Panc1 (cell line): ENCODE measurements at regions of chr1 and their contacts with region 1.

Region 1: GRCh38 chr1:150243003-150243402 is 7.1 kb upstream of the ANP32E start:
- DNase-seq: no peak
- ATAC-seq: no peak
- H3K4me3 ChIP-seq: no peak overlapping the region
- H3K27ac ChIP-seq: no peak overlapping the region
- H3K4me1 ChIP-seq: no peaks in the 10 kb centered on the region
- H3K27me3 ChIP-seq: no peaks in the 10 kb centered on the region
- CTCF ChIP-seq: no peak

Region 2: DNA sequence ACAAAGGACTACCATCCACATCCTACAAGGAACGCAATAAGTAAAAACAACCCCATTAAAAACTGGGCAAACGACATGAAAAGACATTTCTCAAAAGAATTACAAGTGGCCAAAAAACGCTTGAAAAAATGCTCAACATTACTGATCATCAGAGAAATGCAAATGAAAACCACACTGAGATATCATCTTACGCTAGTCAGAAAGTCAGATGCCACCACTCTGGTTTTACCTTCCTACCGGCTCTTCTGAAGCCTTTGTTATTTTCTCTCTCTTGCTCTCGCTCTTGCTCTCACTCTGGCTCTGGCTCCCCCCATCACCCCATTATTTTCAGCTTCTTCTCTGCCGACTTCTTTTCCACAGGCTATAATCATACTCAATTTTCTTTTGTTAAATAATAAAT is 136.7 kb before region 1 on chr1:
- CTCF ChIA-PET with region 1: no interaction called
- POLR2A ChIA-PET with region 1: no interaction called
- in situ Hi-C with region 1: no loop called
- intact Hi-C with region 1: no loop called
- DNase-seq: no peak
- ATAC-seq: no peak
- H3K4me3 ChIP-seq: no peak overlapping the region
- H3K27ac ChIP-seq: no peak overlapping the region
- H3K4me1 ChIP-seq: no peaks in the 10 kb centered on the region
- H3K27me3 ChIP-seq: no peaks in the 10 kb centered on the region
- CTCF ChIP-seq: no peak

Region 3: GRCh38 chr1:150221552-150221951 is 21.5 kb before region 1 on chr1:
- CTCF ChIA-PET with region 1: no interaction called
- POLR2A ChIA-PET with region 1: interaction called, 12 read pairs
- in situ Hi-C with region 1: no loop called
- intact Hi-C with region 1: no loop called
- DNase-seq: no peak
- ATAC-seq: no peak; the same call in 1 of the 2 replicates
- H3K4me3 ChIP-seq: no peak overlapping the region
- H3K27ac ChIP-seq: no peak overlapping the region
- H3K4me1 ChIP-seq: no peaks in the 10 kb centered on the region
- H3K27me3 ChIP-seq: no peaks in the 10 kb centered on the region
- CTCF ChIP-seq: no peak; the same call in 1 of the 2 replicates